Activated CD4-positive, alpha-beta memory T cell treated with anti-CD3 and anti-CD28 coated beads for 36 hours (primary cell): ENCODE measurements at regions of chr1 and their contacts with region 1.

Region 1: DNA sequence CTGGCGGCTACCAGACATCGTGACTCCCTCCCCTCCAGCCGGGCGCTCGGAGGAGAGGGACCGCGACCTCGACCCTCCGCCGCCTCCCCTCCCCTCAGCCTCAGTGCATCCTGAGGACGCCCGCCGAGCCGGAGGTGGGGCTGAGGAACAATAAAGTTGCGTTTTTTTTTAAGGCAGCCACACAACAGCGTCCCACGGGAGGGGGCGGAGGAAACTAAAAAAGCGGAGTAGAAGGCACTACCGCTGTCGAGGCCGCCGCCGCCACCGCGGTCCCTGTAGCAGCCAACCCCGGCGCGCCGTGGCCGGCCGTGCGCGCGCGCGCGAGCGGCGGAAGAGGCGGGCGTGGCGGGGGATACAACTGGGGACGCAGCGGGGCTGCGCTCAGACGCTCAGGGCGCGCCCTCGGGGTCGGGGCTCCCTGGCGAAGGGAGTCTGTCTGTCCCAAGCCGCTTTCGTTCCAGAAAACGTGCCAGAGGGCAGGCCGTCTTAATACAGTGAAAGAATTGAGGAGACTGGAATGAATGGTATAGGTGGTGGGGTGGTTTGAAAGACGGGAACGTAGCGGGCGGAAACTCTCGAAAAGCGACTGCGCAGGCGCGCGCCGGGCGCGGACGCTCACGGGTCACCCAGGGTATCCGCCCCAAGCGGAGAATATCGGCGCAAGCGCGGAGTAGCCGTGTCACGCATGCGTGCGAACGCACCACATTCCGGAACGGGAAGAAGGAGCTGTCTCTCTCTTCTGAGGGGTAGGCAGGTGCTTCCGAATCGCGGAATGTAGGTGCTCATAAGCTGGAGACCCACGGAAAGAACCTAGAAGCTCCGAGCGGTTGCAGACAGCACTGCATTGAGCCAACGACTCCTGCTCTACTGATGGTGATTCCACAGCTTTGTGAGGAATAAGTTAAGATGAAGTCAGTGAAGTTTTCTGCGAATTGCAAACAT is at the start of gene COP1:
- DNase-seq: peak; percentile 98
- H3K4me3 Mint-ChIP-seq: peak within 1 kb of the TSS; percentile 99
- H3K27ac Mint-ChIP-seq: peak within 1 kb of the TSS; percentile 97
- H3K4me1 Mint-ChIP-seq: peaks cover 24% of the 10 kb centered on the region
- H3K27me3 Mint-ChIP-seq: no peaks in the 10 kb centered on the region
- total RNA-seq, gene COP1: 34.2 to 34.7 TPM

Region 2: GRCh38 chr1:175192630-175193526 is 1014.4 kb before region 1 on chr1 and contains the start of gene KIAA0040:
- CTCF ChIA-PET with region 1: no interaction called
- POLR2A ChIA-PET with region 1: no interaction called
- intact Hi-C with region 1: loop called (anchors 2 kb)
- DNase-seq: peak; percentile 71
- H3K4me3 Mint-ChIP-seq: peak within 1 kb of the TSS; percentile 95
- H3K27ac Mint-ChIP-seq: peak within 1 kb of the TSS; percentile 93
- H3K4me1 Mint-ChIP-seq: peaks cover 48% of the 10 kb centered on the region
- H3K27me3 Mint-ChIP-seq: no peaks in the 10 kb centered on the region
- total RNA-seq, gene KIAA0040: 32.9 to 34.5 TPM

Region 3: GRCh38 chr1:175679981-175680652 is 527.1 kb before region 1 on chr1:
- CTCF ChIA-PET with region 1: no interaction called
- POLR2A ChIA-PET with region 1: no interaction called
- intact Hi-C with region 1: no loop called
- DNase-seq: no peak
- H3K4me3 Mint-ChIP-seq: no peak overlapping the region
- H3K27ac Mint-ChIP-seq: no peak overlapping the region
- H3K4me1 Mint-ChIP-seq: no peaks in the 10 kb centered on the region
- H3K27me3 Mint-ChIP-seq: peaks cover 4% of the 10 kb centered on the region

Region 4: DNA sequence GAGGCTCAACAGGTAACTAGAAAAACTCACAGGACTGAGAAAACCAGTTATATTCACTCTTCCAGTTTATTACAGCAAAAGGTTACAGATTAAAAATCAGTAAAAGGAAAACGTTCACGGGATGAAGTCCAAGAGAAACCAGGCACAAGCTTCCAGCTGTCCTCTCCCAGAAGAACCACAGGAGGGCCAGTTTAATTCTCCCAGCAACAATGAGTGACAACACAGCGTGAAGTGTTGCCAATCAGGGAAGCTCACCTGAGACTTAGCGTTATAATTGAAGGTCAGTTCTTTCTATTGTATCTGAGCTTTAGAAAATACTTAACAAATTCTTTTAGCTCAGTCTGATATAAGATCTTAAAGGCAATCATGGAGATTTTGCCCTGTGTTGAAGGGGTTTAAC is 398.7 kb before region 1 on chr1:
- CTCF ChIA-PET with region 1: no interaction called
- POLR2A ChIA-PET with region 1: no interaction called
- intact Hi-C with region 1: no loop called
- DNase-seq: no peak
- H3K4me3 Mint-ChIP-seq: no peak overlapping the region
- H3K27ac Mint-ChIP-seq: no peak overlapping the region
- H3K4me1 Mint-ChIP-seq: no peaks in the 10 kb centered on the region
- H3K27me3 Mint-ChIP-seq: peaks cover 14% of the 10 kb centered on the region

Region 5: DNA sequence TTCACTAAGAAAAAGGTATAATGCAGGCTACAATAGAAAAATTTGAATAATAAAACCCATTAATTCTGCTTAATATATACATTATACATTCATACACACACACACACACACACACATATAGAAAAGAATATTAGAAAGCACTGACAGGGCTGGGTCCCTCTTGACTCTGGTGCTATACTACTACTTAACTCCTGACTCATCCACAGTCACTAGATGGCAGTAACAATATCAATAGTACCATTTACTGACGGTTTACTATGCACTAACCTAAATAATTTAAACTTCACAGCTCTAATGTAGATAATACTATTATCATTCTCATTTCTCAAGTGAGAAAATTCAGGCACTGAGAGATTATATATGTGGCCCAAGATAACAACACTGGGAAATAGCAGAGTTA is 87.7 kb before region 1 on chr1:
- CTCF ChIA-PET with region 1: no interaction called
- POLR2A ChIA-PET with region 1: no interaction called
- intact Hi-C with region 1: loop called (anchors 5 kb)
- DNase-seq: no peak
- H3K4me3 Mint-ChIP-seq: no peak overlapping the region
- H3K27ac Mint-ChIP-seq: no peak overlapping the region
- H3K4me1 Mint-ChIP-seq: no peaks in the 10 kb centered on the region
- H3K27me3 Mint-ChIP-seq: no peaks in the 10 kb centered on the region

Region 6: GRCh38 chr1:176177764-176178163 is 29.5 kb before region 1 on chr1:
- CTCF ChIA-PET with region 1: no interaction called
- POLR2A ChIA-PET with region 1: interaction called, 3 read pairs
- intact Hi-C with region 1: loop called (anchors 1 kb)
- DNase-seq: no peak
- H3K4me3 Mint-ChIP-seq: peak overlapping the region; percentile 26
- H3K27ac Mint-ChIP-seq: peak overlapping the region; percentile 68
- H3K4me1 Mint-ChIP-seq: peaks cover 37% of the 10 kb centered on the region
- H3K27me3 Mint-ChIP-seq: no peaks in the 10 kb centered on the region

Region 7: GRCh38 chr1:176241385-176242015 is 34.3 kb after region 1 on chr1:
- CTCF ChIA-PET with region 1: no interaction called
- POLR2A ChIA-PET with region 1: no interaction called
- intact Hi-C with region 1: loop called (anchors 1 kb)
- DNase-seq: peak; percentile 41
- H3K4me3 Mint-ChIP-seq: no peak overlapping the region
- H3K27ac Mint-ChIP-seq: no peak overlapping the region
- H3K4me1 Mint-ChIP-seq: peaks cover 7% of the 10 kb centered on the region
- H3K27me3 Mint-ChIP-seq: peaks cover 13% of the 10 kb centered on the region

Region 8: GRCh38 chr1:176315519-176316220 is 108.4 kb after region 1 on chr1:
- CTCF ChIA-PET with region 1: no interaction called
- POLR2A ChIA-PET with region 1: no interaction called
- intact Hi-C with region 1: no loop called
- DNase-seq: no peak
- H3K4me3 Mint-ChIP-seq: no peak overlapping the region
- H3K27ac Mint-ChIP-seq: no peak overlapping the region
- H3K4me1 Mint-ChIP-seq: no peaks in the 10 kb centered on the region
- H3K27me3 Mint-ChIP-seq: no peaks in the 10 kb centered on the region